Activated naive CD4-positive, alpha-beta T cell treated with anti-CD3 and anti-CD28 coated beads for 36 hours (primary cell): ENCODE measurements at regions of chr18 and their contacts with region 1.

Region 1: GRCh38 chr18:5424903-5425664 is 118.7 kb downstream of the EPB41L3 start:
- DNase-seq: peak; percentile 22
- H3K4me3 Mint-ChIP-seq: no peak overlapping the region
- H3K27ac Mint-ChIP-seq: no peak overlapping the region
- H3K4me1 Mint-ChIP-seq: no peaks in the 10 kb centered on the region
- H3K27me3 Mint-ChIP-seq: peaks cover 5% of the 10 kb centered on the region

Region 2: DNA sequence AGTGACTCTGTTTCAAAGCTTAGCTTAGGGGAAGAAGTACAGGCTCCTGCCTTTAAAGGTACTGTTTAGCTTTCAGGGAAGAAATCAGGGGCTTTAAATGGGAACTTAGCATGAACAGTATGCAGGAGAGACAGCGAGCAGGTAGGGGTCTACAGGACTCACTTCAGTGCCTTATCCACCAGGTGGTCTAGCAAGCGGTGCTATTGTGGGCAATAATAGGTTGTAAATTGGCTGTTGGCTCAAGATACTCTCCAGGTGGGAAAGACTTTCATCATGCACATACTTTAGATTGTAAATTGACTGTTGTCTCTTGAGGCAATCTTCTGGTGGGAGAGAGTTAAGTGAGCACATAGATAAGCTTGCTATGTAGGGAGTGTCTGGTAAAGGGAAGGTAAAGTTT is 611.4 kb before region 1 on chr18:
- CTCF ChIA-PET with region 1: no interaction called
- intact Hi-C with region 1: no loop called
- DNase-seq: no peak
- H3K4me3 Mint-ChIP-seq: no peak overlapping the region
- H3K27ac Mint-ChIP-seq: no peak overlapping the region
- H3K4me1 Mint-ChIP-seq: no peaks in the 10 kb centered on the region
- H3K27me3 Mint-ChIP-seq: no peaks in the 10 kb centered on the region

Region 3: GRCh38 chr18:5106730-5107129 is 318.4 kb before region 1 on chr18:
- CTCF ChIA-PET with region 1: no interaction called
- intact Hi-C with region 1: loop called (anchors 10 kb)
- DNase-seq: no peak
- H3K4me3 Mint-ChIP-seq: no peak overlapping the region
- H3K27ac Mint-ChIP-seq: no peak overlapping the region
- H3K4me1 Mint-ChIP-seq: peaks cover 5% of the 10 kb centered on the region
- H3K27me3 Mint-ChIP-seq: no peaks in the 10 kb centered on the region

Region 4: DNA sequence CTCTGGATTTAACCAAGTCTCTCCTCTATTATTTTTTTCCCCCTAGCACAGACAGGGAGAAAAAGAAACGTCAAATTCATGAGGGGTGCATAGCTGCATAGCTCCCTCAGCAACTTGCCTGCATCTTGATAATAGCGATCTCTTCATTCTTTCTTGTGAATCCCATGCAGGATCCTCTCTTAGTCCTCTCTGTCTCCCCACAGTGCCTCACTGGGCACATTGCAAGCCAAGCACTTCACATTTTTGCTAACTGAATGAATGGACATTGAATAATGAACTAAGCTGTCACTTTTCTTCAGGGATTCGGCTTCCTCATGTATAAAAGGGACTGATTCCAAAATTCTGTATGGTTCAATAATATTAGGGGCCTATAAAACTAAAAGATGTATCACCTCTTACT is 121.6 kb after region 1 on chr18:
- CTCF ChIA-PET with region 1: no interaction called
- intact Hi-C with region 1: loop called (anchors 1 kb)
- DNase-seq: peak; percentile 11
- H3K4me3 Mint-ChIP-seq: no peak overlapping the region
- H3K27ac Mint-ChIP-seq: no peak overlapping the region
- H3K4me1 Mint-ChIP-seq: peaks cover 8% of the 10 kb centered on the region
- H3K27me3 Mint-ChIP-seq: peaks cover 36% of the 10 kb centered on the region